Mammary epithelial cell (primary cell): ENCODE measurements at regions of chr9 and their contacts with region 1.

Region 1: GRCh38 chr9:36873247-36873875 is 160.7 kb downstream of the PAX5 start:
- DNase-seq: peak; percentile 40
- H3K4me3 ChIP-seq: no peak overlapping the region
- H3K27ac ChIP-seq: no peak overlapping the region
- H3K4me1 ChIP-seq: no peaks in the 10 kb centered on the region
- H3K27me3 ChIP-seq: peaks cover 2% of the 10 kb centered on the region
- CTCF ChIP-seq: peak; percentile 94 to 96

Region 2: GRCh38 chr9:36974731-36975130 is 101.4 kb after region 1 on chr9:
- CTCF ChIA-PET with region 1: no interaction called
- dilution Hi-C with region 1: no loop called
- in situ Hi-C with region 1: no loop called
- intact Hi-C with region 1: loop called (anchors 1 kb)
- DNase-seq: no peak
- H3K4me3 ChIP-seq: no peak overlapping the region
- H3K27ac ChIP-seq: no peak overlapping the region
- H3K4me1 ChIP-seq: peaks cover 29% of the 10 kb centered on the region
- H3K27me3 ChIP-seq: no peaks in the 10 kb centered on the region
- CTCF ChIP-seq: peak in 1 of 2 donors; percentile 32

Region 3: DNA sequence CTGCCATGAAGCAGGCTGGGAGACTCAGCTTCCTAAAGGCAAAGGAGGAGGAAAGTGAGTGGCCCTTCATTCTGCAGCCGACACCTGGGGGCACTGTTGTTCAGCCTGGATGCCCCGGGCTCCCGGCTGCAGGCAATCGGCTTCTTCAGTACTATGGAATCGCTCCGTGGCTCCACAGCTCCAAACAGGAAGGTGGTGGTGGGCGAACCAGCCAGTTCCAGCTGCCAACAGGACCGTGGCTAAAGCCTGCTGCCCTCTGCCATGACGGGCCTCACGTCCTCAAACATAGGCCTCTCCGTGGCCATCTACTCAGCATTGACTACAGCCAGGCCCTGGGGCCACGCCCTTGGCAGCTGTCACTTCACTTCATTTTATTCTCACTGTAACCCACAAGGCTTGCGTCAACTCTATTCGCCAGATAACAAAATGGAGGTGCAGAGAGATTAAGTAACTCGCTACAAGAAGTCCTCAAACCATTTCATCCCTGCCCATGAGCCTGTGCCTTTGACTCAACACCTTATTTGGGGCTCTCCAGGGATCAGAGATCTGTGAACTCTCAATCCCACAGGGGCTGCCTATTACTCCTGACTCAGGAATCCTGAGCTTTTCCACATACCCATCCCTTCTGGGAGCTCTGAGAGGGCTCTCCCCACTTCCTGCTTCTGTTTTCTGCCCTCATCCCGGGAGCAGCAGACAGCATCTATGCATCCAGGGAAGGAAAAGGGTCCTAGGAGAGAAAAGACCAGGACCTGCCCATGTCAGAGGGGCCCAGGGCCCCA is 122.8 kb after region 1 on chr9:
- CTCF ChIA-PET with region 1: interaction called, 6 read pairs
- dilution Hi-C with region 1: no loop called
- in situ Hi-C with region 1: loop called in 1 of 2 experiments (anchors 5 kb)
- intact Hi-C with region 1: loop called (anchors 1 kb)
- DNase-seq: peak; percentile 20
- H3K4me3 ChIP-seq: no peak overlapping the region
- H3K27ac ChIP-seq: no peak overlapping the region
- H3K4me1 ChIP-seq: no peaks in the 10 kb centered on the region
- H3K27me3 ChIP-seq: no peaks in the 10 kb centered on the region
- CTCF ChIP-seq: peak; percentile 35 to 59

Region 4: DNA sequence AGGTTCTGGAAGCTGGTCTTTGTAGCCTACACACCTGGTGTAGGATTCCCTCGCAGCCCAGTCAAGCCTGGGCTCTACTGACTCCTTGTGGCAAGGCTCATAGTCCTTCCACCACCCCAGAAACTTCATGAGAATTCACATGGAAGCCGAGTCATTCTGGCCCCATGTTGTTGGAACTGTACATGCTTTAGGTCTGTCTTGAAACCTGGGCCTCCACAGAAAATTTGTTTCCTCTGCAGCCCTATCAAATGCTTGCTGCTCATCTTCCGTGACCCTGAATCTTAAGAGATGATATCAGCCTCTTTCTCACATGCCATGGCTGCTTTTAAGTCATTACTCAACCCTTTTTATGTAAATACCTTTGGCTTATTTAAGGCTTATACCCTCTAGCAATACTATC is 435.8 kb after region 1 on chr9:
- CTCF ChIA-PET with region 1: no interaction called
- dilution Hi-C with region 1: no loop called
- in situ Hi-C with region 1: no loop called
- intact Hi-C with region 1: loop called (anchors 10 kb)
- DNase-seq: peak; percentile 5
- H3K4me3 ChIP-seq: no peak overlapping the region
- H3K27ac ChIP-seq: no peak overlapping the region
- H3K4me1 ChIP-seq: no peaks in the 10 kb centered on the region
- H3K27me3 ChIP-seq: no peaks in the 10 kb centered on the region
- CTCF ChIP-seq: peak; percentile 16 to 44